MCF 10A (cell line): ENCODE measurements at regions of chr15 and their contacts with region 1.

Region 1: GRCh38 chr15:66803182-66803729 is 101.2 kb downstream of the SMAD6 start:
- DNase-seq: peak; percentile 97
- H3K4me3 Mint-ChIP-seq: peak overlapping the region; percentile 50
- H3K27ac Mint-ChIP-seq: peak overlapping the region; percentile 98
- H3K4me1 Mint-ChIP-seq: peaks cover 32% of the 10 kb centered on the region
- H3K27me3 Mint-ChIP-seq: no peaks in the 10 kb centered on the region
- CTCF ChIP-seq: no peak

Region 2: GRCh38 chr15:66650434-66650833 is 152.8 kb before region 1 on chr15:
- CTCF ChIA-PET with region 1: no interaction called
- POLR2A ChIA-PET with region 1: no interaction called
- intact Hi-C with region 1: no loop called
- DNase-seq: peak; percentile 1
- H3K4me3 Mint-ChIP-seq: no peak overlapping the region
- H3K27ac Mint-ChIP-seq: no peak overlapping the region
- H3K4me1 Mint-ChIP-seq: no peaks in the 10 kb centered on the region
- H3K27me3 Mint-ChIP-seq: no peaks in the 10 kb centered on the region
- CTCF ChIP-seq: no peak

Region 3: DNA sequence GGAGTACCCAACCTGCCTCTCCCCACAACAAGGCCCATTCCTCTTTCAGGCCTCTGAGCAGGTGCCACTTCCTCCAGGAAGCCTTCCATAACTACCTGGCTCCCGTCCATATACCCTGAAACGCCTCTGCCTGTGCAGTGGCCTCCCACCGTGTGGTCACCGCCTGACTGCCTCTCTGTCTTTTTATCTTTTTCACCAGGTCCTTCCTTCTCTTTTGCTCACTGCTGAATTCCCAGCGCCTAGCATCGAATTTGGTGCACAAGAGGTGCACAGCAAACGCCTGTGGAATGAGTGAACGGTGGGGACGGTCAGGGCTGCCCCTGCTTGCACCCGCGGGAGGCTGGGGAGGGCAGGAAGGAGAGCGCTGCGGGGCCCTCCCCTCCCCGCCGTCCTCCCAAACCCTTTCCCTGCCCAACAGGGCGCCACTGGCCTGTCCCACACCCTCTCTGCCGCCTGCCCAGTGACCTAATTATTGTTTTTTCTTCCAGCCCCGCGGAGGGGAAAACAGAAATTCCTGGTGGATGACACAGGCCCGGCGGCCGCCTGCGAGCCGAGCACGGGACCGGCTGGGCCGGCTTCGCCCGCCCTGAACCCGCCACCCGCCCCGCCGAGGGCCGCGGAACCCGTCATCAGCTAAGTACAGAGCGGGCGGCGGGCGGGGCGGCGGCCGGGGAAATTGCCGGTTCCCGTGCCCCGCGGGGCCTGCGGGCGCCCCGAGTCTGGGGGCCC is 38.9 kb after region 1 on chr15:
- CTCF ChIA-PET with region 1: no interaction called
- POLR2A ChIA-PET with region 1: no interaction called
- intact Hi-C with region 1: loop called (anchors 5 kb)
- DNase-seq: peak; percentile 75
- H3K4me3 Mint-ChIP-seq: peak overlapping the region; percentile 64
- H3K27ac Mint-ChIP-seq: peak overlapping the region; percentile 68
- H3K4me1 Mint-ChIP-seq: peaks cover 11% of the 10 kb centered on the region
- H3K27me3 Mint-ChIP-seq: no peaks in the 10 kb centered on the region
- CTCF ChIP-seq: no peak